ENCODE measurements at regions of chr10 and their contacts with region 1.

Region 1: DNA sequence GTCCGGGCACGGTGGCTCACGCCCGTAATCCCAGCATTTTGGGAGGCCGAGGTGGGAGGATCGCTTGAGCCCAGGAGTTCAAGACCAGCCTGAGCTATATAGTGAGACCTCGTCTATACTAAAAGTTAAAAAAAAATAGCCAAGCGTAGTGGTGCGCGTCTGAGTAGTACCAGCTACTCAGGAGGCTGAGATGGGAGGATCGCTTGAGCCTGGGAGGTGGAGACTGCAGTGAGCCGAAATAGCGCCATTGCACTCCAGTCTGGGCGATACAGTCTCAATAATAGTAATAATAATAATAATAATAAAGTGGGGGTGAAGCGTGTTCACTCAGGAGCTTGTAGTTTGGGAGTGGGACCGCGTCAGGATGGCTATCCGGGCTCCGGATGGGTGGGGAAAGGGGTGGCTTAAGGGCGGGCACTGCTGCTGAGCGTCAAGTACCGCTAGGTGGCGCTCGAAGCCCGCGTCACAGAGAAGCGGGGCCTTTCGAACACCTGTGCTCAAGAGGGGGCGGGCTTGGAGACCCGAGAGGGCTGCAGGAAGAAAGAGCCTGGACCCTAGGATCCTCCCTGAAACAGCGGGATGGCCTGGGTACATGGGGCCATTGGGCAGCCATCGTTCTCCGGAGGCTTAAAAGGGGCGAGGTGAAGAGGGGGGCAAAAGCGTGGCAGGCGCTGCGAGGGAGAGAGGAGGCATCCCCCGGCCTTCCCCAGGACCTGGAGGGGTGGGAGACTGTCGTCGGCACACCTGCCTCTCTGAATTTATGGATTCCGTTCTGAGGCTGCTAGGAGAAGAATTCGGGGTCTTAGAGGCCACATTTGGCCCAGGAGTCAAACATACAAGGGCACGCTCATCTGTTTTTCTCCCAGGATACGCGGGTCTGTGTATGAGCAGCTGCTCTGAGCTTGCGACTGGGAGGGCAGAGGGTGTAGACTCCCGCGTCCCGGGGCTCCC is 14.5 kb downstream of the LBX1 start:
- H3K4me3 Mint-ChIP-seq: peak overlapping the region; percentile 59
- H3K27ac Mint-ChIP-seq: no peak overlapping the region
- H3K4me1 Mint-ChIP-seq: peaks cover 28% of the 10 kb centered on the region
- H3K27me3 Mint-ChIP-seq: peaks cover 96% of the 10 kb centered on the region

Region 2: GRCh38 chr10:100882671-100883311 is 331.9 kb before region 1 on chr10:
- intact Hi-C with region 1: no loop called
- H3K4me3 Mint-ChIP-seq: no peak overlapping the region
- H3K27ac Mint-ChIP-seq: no peak overlapping the region
- H3K4me1 Mint-ChIP-seq: no peaks in the 10 kb centered on the region
- H3K27me3 Mint-ChIP-seq: peaks cover 26% of the 10 kb centered on the region

Region 3: GRCh38 chr10:101291331-101292193 is 76.8 kb after region 1 on chr10:
- intact Hi-C with region 1: loop called (anchors 5 kb)
- H3K4me3 Mint-ChIP-seq: peak overlapping the region; percentile 62
- H3K27ac Mint-ChIP-seq: no peak overlapping the region
- H3K4me1 Mint-ChIP-seq: no peaks in the 10 kb centered on the region
- H3K27me3 Mint-ChIP-seq: peaks cover 90% of the 10 kb centered on the region

Region 4: GRCh38 chr10:101441541-101442455 is 227.1 kb after region 1 on chr10:
- intact Hi-C with region 1: loop called (anchors 2 kb)
- H3K4me3 Mint-ChIP-seq: no peak overlapping the region
- H3K27ac Mint-ChIP-seq: no peak overlapping the region
- H3K4me1 Mint-ChIP-seq: peaks cover 6% of the 10 kb centered on the region
- H3K27me3 Mint-ChIP-seq: no peaks in the 10 kb centered on the region

Region 5: GRCh38 chr10:101467286-101467770 is 252.6 kb after region 1 on chr10:
- intact Hi-C with region 1: loop called (anchors 2 kb)
- H3K4me3 Mint-ChIP-seq: no peak overlapping the region
- H3K27ac Mint-ChIP-seq: no peak overlapping the region
- H3K4me1 Mint-ChIP-seq: peaks cover 6% of the 10 kb centered on the region
- H3K27me3 Mint-ChIP-seq: no peaks in the 10 kb centered on the region

Region 6: GRCh38 chr10:101569838-101570766 is 355.4 kb after region 1 on chr10:
- intact Hi-C with region 1: loop called (anchors 2 kb)
- H3K4me3 Mint-ChIP-seq: peak overlapping the region; percentile 77
- H3K27ac Mint-ChIP-seq: peak overlapping the region; percentile 69
- H3K4me1 Mint-ChIP-seq: peaks cover 25% of the 10 kb centered on the region
- H3K27me3 Mint-ChIP-seq: peaks cover 49% of the 10 kb centered on the region

Region 7: GRCh38 chr10:101782811-101783735 is 568.4 kb after region 1 on chr10 and contains the start of gene NPM3:
- intact Hi-C with region 1: loop called (anchors 5 kb)
- H3K4me3 Mint-ChIP-seq: peak within 1 kb of the TSS; percentile 100
- H3K27ac Mint-ChIP-seq: peak within 1 kb of the TSS; percentile 91
- H3K4me1 Mint-ChIP-seq: peaks cover 58% of the 10 kb centered on the region
- H3K27me3 Mint-ChIP-seq: peaks cover 24% of the 10 kb centered on the region